CD4-positive, alpha-beta memory T cell (primary cell): ENCODE measurements at regions of chr10 and their contacts with region 1.

Region 1: GRCh38 chr10:119542988-119543813 is 682 bp upstream of the RGS10 start:
- DNase-seq: peak; percentile 60 to 67 (median 64)
- H3K4me3 ChIP-seq: peak overlapping the region in 1 of 2 donors; percentile 88
- H3K4me3 Mint-ChIP-seq: peak overlapping the region; percentile 94 to 98 (median 95)
- H3K27ac ChIP-seq: peak overlapping the region; percentile 57
- H3K27ac Mint-ChIP-seq: peak overlapping the region; percentile 83 to 96 (median 91)
- H3K4me1 ChIP-seq: peaks cover 42% of the 10 kb centered on the region
- H3K4me1 Mint-ChIP-seq: peaks cover 28 to 43% (median 38%) of the 10 kb centered on the region in 4 donors
- H3K27me3 ChIP-seq: no peaks in the 10 kb centered on the region
- H3K27me3 Mint-ChIP-seq: no peaks in the 10 kb centered on the region

Region 2: GRCh38 chr10:119199231-119199992 is 343.8 kb before region 1 on chr10:
- CTCF ChIA-PET with region 1: interaction called, 32 read pairs
- POLR2A ChIA-PET with region 1: interaction called, 4 read pairs
- intact Hi-C with region 1: loop called (anchors 2 kb)
- DNase-seq: peak in 4 of 5 donors; percentile 34 to 54 (median 50)
- H3K4me3 ChIP-seq: no peak overlapping the region
- H3K4me3 Mint-ChIP-seq: no peak overlapping the region
- H3K27ac ChIP-seq: no peak overlapping the region
- H3K27ac Mint-ChIP-seq: no peak overlapping the region
- H3K4me1 ChIP-seq: no peaks in the 10 kb centered on the region
- H3K4me1 Mint-ChIP-seq: peaks cover 0 to 1% (median 0%) of the 10 kb centered on the region in 4 donors
- H3K27me3 ChIP-seq: no peaks in the 10 kb centered on the region
- H3K27me3 Mint-ChIP-seq: no peaks in the 10 kb centered on the region

Region 3: DNA sequence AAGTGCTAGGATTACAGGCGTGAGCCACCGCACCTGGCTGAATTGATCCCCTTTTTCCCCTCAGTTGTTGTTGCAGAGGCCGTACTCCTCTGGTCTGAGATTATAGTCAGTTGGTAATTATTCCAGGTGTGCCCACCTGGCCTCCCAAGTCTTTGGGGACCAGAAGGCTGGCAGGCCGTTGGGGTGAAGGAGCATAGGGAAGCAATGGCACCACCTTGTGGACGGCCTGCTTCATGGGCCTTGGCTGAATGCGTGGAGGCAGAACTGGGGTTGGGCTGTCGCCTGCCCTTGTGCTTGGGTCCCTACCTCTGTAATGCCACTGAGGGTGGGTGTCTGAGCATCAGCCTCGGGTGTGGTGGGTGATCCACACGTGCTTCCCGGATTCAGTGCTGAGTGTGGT is 126.3 kb before region 1 on chr10:
- CTCF ChIA-PET with region 1: interaction called, 10 read pairs
- POLR2A ChIA-PET with region 1: no interaction called
- intact Hi-C with region 1: no loop called
- DNase-seq: peak; percentile 54 to 65 (median 62)
- H3K4me3 ChIP-seq: no peak overlapping the region
- H3K4me3 Mint-ChIP-seq: no peak overlapping the region
- H3K27ac ChIP-seq: no peak overlapping the region
- H3K27ac Mint-ChIP-seq: peak overlapping the region in 1 of 7 donors; percentile 12
- H3K4me1 ChIP-seq: no peaks in the 10 kb centered on the region
- H3K4me1 Mint-ChIP-seq: peaks cover 0 to 2% (median under 1%) of the 10 kb centered on the region in 4 donors
- H3K27me3 ChIP-seq: no peaks in the 10 kb centered on the region
- H3K27me3 Mint-ChIP-seq: no peaks in the 10 kb centered on the region

Region 4: GRCh38 chr10:119496273-119496672 is 46.9 kb before region 1 on chr10:
- CTCF ChIA-PET with region 1: interaction called, 50 read pairs
- POLR2A ChIA-PET with region 1: interaction called, 97 read pairs
- intact Hi-C with region 1: no loop called
- DNase-seq: no peak
- H3K4me3 ChIP-seq: no peak overlapping the region
- H3K4me3 Mint-ChIP-seq: no peak overlapping the region
- H3K27ac ChIP-seq: no peak overlapping the region
- H3K27ac Mint-ChIP-seq: peak overlapping the region; percentile 66 to 83 (median 81)
- H3K4me1 ChIP-seq: peaks cover 66% of the 10 kb centered on the region
- H3K4me1 Mint-ChIP-seq: peaks cover 40 to 79% (median 64%) of the 10 kb centered on the region in 4 donors
- H3K27me3 ChIP-seq: no peaks in the 10 kb centered on the region
- H3K27me3 Mint-ChIP-seq: no peaks in the 10 kb centered on the region

Region 5: DNA sequence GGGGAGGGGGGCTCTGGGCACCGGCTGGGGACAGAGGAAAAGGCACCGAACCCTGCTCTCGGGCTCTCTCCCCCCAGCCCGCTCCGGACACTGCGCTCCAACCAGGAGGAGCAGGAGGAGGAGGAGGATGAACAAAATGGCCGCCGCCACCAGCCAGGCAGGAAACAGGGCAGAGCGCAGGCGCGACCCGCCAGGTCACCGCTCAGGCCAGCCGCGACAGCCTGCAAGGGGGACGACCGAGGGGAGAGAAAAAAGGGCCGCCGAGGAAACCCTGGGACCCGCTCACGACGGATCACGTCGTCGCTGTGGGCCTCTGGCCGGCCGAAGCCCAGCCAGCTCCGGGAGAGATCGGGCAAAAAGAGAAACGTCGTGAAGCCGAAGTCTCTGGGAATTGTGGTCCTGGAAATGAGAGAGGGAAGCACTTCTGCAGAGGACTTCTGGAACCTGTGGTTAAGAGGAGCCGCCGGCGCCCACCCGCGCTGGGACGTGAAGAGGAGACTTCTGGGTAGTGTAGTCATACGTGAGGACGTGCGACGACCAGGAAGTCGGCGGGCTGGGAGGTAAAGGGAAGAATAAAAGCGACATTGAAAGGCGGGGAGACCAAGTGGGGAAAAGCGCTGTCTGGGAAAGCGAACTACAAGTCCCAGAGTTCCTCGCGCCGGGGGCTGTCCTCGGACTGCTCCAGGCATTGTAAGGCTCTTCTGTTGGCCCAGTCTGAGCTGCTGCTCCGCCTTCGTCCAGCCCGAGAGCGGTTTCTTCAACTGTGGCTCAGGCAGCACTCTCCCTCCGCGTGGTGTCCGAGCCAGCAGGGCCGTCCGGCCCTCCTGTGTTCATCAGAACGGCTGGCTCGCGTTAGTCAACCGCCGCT is 53.6 kb after region 1 on chr10 and contains the start of gene TIAL1:
- CTCF ChIA-PET with region 1: interaction called, 9 read pairs
- POLR2A ChIA-PET with region 1: interaction called, 14 read pairs
- intact Hi-C with region 1: loop called (anchors 2 kb)
- DNase-seq: peak; percentile 89 to 97 (median 91)
- H3K4me3 ChIP-seq: peak within 1 kb of the TSS; percentile 83 to 99
- H3K4me3 Mint-ChIP-seq: peak within 1 kb of the TSS; percentile 93 to 100 (median 99)
- H3K27ac ChIP-seq: peak within 1 kb of the TSS; percentile 98
- H3K27ac Mint-ChIP-seq: peak within 1 kb of the TSS; percentile 97 to 100 (median 99)
- H3K4me1 ChIP-seq: peaks cover 43% of the 10 kb centered on the region
- H3K4me1 Mint-ChIP-seq: peaks cover 37 to 57% (median 44%) of the 10 kb centered on the region in 4 donors
- H3K27me3 ChIP-seq: no peaks in the 10 kb centered on the region
- H3K27me3 Mint-ChIP-seq: no peaks in the 10 kb centered on the region
- total RNA-seq, gene TIAL1: 201 to 212 TPM

Region 6: DNA sequence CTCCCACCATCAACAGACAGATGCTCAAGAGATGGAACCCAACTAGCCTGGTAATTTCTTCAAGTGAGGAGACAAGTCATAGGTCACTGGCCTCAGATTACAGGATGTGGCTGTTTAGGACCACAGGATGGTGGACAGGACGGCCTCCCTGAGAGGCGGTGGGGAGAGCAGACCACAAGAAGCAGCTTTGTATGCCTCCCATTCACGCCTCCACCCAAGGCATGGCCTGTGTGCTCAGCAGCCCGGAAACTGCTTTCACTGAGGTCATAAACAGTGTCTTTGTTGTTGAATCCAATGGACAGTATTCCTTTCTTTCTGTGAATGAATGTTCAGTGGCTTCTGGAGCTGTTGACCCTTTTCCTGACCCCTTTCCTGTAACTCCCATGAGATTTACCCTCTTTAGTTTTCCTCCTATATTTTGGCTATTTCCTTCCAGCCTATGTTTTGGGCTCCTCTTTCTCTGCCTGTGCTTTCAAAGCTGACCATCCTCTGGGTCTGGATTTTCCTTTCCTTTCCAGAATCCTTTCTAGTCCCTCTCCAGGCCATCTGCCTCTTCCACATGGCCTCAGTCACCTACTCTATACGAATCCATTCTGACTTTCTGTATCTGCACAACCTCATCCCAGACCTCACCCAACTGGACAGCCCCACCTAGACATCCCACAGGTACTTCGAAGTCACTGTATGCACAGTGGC is 150.2 kb after region 1 on chr10:
- CTCF ChIA-PET with region 1: no interaction called
- POLR2A ChIA-PET with region 1: no interaction called
- intact Hi-C with region 1: no loop called
- DNase-seq: no peak
- H3K4me3 ChIP-seq: no peak overlapping the region
- H3K4me3 Mint-ChIP-seq: no peak overlapping the region
- H3K27ac ChIP-seq: no peak overlapping the region
- H3K27ac Mint-ChIP-seq: peak overlapping the region in 1 of 7 donors; percentile 66
- H3K4me1 ChIP-seq: no peaks in the 10 kb centered on the region
- H3K4me1 Mint-ChIP-seq: no peaks in the 10 kb centered on the region
- H3K27me3 ChIP-seq: no peaks in the 10 kb centered on the region
- H3K27me3 Mint-ChIP-seq: peaks cover 0 to 5% of the 10 kb centered on the region in 2 donors